Endothelial cell of umbilical vein (primary cell): ENCODE measurements at regions of chr13 and their contacts with region 1.

Region 1: DNA sequence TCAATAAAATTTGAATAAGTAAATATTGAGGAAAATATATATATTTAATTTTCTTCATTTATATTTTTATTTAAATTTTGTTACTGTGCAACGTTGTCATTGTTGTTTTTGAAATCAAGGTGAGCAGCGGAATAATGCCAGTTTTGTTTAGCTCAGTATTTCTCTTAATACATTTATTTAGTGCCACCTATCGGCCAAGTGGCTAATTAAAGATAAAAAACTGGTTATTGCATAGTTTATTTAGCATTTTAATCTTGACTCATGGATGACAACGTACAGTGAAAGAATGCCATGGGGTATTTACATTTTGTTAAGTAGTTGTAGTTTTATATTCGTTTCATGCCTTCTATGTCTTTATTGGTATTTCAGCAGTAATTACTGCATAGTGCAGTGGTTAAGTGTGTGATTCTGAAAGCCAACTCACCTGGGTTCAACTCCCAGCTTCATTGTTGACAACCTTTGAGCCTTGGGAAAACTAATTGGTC is 265.9 kb downstream of the MYO16 start:
- DNase-seq: peak; percentile 47
- H3K4me3 ChIP-seq: no peak overlapping the region
- H3K27ac ChIP-seq: no peak overlapping the region
- H3K4me1 ChIP-seq: peaks cover 8% of the 10 kb centered on the region
- H3K27me3 ChIP-seq: peaks cover 0 to 4% of the 10 kb centered on the region in 2 experiments
- CTCF ChIP-seq: peak; percentile 23 to 28
- POLR2A ChIP-seq: no peak

Region 2: GRCh38 chr13:108176685-108177274 is 718.5 kb before region 1 on chr13:
- CTCF ChIA-PET with region 1: interaction called, 11 read pairs
- POLR2A ChIA-PET with region 1: no interaction called
- dilution Hi-C with region 1: no loop called
- intact Hi-C with region 1: loop called (anchors 2 kb)
- DNase-seq: peak; percentile 18
- H3K4me3 ChIP-seq: no peak overlapping the region
- H3K27ac ChIP-seq: no peak overlapping the region
- H3K4me1 ChIP-seq: no peaks in the 10 kb centered on the region
- H3K27me3 ChIP-seq: no peaks in the 10 kb centered on the region
- CTCF ChIP-seq: peak; percentile 41 to 50
- POLR2A ChIP-seq: no peak

Region 3: DNA sequence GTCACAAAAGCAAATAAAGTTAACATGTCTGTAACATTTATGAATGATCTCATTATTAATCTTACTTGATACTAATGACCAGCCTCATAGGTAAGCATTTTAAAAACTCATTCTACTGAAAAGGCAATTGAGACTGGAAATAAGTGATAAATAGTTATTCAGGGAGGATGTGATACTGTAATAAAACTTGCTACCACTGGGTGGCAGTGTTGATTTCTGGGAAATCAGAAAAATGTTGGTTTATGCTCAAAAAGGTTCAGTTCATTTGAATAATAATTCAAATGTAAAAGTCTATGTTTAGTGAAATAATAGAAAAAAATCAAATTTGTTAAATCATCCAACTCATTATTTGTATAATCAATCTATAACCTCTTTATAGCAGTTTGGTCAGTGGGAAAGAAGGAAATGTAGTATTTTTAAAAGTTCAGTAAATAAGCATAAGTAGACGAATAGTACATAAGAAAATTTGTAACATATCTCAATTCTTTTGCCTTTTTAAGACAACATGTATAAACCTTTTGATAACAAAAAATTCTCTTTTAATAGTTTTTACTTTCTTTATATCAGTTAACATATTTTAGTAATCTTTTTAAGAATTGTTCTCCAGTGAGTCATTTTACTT is 667.5 kb before region 1 on chr13:
- CTCF ChIA-PET with region 1: interaction called, 7 read pairs
- POLR2A ChIA-PET with region 1: no interaction called
- dilution Hi-C with region 1: no loop called
- intact Hi-C with region 1: loop called (anchors 2 kb)
- DNase-seq: peak; percentile 55
- H3K4me3 ChIP-seq: no peak overlapping the region
- H3K27ac ChIP-seq: no peak overlapping the region
- H3K4me1 ChIP-seq: no peaks in the 10 kb centered on the region
- H3K27me3 ChIP-seq: no peaks in the 10 kb centered on the region
- CTCF ChIP-seq: peak; percentile 49 to 50
- POLR2A ChIP-seq: no peak

Region 4: DNA sequence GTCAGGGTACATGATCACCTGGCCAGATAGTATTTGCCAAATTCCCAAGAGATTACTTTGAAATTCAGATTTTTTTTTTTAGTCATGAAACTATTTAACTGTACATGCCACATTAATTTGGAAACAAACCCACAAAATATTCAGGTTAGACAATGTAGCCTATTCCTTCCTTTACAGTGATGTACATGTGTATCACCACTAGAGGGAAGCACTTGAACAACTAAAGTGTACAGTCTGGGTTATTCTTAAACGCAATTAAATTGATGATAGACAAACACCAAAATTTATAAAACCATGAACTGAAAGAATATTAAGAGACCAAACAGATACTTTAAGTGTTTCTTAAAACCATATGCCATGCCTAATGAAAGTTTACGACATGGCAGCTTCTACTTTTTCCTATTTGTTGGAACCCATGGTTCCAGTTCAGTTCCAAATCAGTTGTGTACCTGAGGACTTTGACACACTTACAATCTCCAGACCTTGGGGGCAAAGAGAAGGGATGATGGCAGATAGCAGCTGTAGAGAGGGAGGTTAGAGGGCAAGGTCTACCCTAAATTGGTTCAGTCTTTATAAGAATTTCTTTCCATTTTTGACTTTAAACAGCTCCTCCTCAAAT is 572.9 kb before region 1 on chr13:
- CTCF ChIA-PET with region 1: interaction called, 32 read pairs
- POLR2A ChIA-PET with region 1: no interaction called
- dilution Hi-C with region 1: no loop called
- intact Hi-C with region 1: loop called (anchors 1 kb)
- DNase-seq: peak; percentile 42
- H3K4me3 ChIP-seq: no peak overlapping the region
- H3K27ac ChIP-seq: no peak overlapping the region
- H3K4me1 ChIP-seq: no peaks in the 10 kb centered on the region
- H3K27me3 ChIP-seq: peaks cover 0 to 3% of the 10 kb centered on the region in 2 experiments
- CTCF ChIP-seq: peak; percentile 50 to 53
- POLR2A ChIP-seq: no peak

Region 5: DNA sequence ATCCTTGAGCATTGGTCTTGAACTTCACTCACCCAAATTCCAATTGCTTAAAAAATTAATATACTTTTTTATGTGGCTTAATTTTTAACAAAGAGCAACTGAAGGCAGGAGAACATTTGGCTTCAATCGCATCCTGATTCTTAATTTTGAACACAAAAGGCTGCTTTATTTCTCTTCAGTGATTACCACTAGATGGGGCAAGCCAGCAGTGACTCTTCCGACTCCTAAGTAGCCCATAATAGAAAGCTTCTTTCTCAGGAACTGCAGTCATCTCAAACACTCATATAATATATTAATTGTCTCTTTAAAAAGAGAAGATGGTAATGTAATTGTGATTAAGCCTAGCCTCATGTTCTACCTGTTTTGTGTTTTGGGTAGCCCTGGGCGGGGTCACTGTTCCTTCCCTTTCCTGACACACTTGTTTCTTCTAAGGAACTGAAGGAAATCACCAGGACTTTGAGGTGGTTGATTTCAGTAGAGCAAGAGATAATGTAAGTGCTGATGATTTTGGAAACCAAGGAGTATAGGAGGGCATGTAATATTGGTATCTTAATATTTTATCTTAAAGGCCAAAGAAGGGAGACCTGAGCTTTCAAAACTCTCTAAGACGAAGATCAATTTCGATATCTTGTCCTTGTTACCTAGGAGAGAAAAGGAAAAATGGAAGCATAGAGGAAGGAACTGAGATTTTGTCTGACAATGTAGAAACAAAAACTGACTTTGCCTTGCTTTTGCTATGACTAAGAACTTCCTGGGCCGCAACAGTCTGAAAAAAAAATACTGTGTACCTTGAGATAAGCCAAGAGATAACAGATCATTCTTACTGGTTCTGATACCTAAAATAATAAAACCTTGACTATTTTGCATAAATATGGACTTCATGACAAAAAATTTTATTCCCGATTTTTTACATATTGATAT is 552.6 kb before region 1 on chr13:
- CTCF ChIA-PET with region 1: interaction called, 47 read pairs
- POLR2A ChIA-PET with region 1: no interaction called
- dilution Hi-C with region 1: no loop called
- intact Hi-C with region 1: loop called (anchors 1 kb)
- DNase-seq: peak; percentile 6
- H3K4me3 ChIP-seq: no peak overlapping the region
- H3K27ac ChIP-seq: no peak overlapping the region
- H3K4me1 ChIP-seq: no peaks in the 10 kb centered on the region
- H3K27me3 ChIP-seq: no peaks in the 10 kb centered on the region
- CTCF ChIP-seq: peak; percentile 14 to 31
- POLR2A ChIP-seq: no peak

Region 6: GRCh38 chr13:109026266-109026665 is 131.0 kb after region 1 on chr13:
- CTCF ChIA-PET with region 1: no interaction called
- POLR2A ChIA-PET with region 1: no interaction called
- dilution Hi-C with region 1: no loop called
- intact Hi-C with region 1: no loop called
- DNase-seq: no peak
- H3K4me3 ChIP-seq: no peak overlapping the region
- H3K27ac ChIP-seq: no peak overlapping the region
- H3K4me1 ChIP-seq: no peaks in the 10 kb centered on the region
- H3K27me3 ChIP-seq: no peaks in the 10 kb centered on the region
- CTCF ChIP-seq: no peak
- POLR2A ChIP-seq: no peak